PC-9 (cell line): ENCODE measurements at regions of chr9 and their contacts with region 1.

Region 1: GRCh38 chr9:104895572-104895971 is 32.4 kb downstream of the ABCA1 start:
- DNase-seq: no peak
- H3K4me3 ChIP-seq: no peak overlapping the region
- H3K27ac ChIP-seq: no peak overlapping the region
- H3K4me1 ChIP-seq: no peaks in the 10 kb centered on the region
- H3K27me3 ChIP-seq: no peaks in the 10 kb centered on the region
- CTCF ChIP-seq: no peak

Region 2: GRCh38 chr9:104868687-104869404 is 26.7 kb before region 1 on chr9:
- CTCF ChIA-PET with region 1: no interaction called
- POLR2A ChIA-PET with region 1: interaction called, 11 read pairs
- intact Hi-C with region 1: no loop called
- DNase-seq: peak; percentile 72 to 85
- H3K4me3 ChIP-seq: peak overlapping the region; percentile 20; the same call in 1 of the 2 replicates
- H3K27ac ChIP-seq: peak overlapping the region; percentile 90
- H3K4me1 ChIP-seq: peaks cover 87% of the 10 kb centered on the region
- H3K27me3 ChIP-seq: no peaks in the 10 kb centered on the region
- CTCF ChIP-seq: no peak

Region 3: GRCh38 chr9:105007143-105007542 is 111.6 kb after region 1 on chr9:
- CTCF ChIA-PET with region 1: no interaction called
- POLR2A ChIA-PET with region 1: no interaction called
- intact Hi-C with region 1: no loop called
- DNase-seq: peak; percentile 39 to 94
- H3K4me3 ChIP-seq: peak overlapping the region; percentile 16; the same call in 1 of the 2 replicates
- H3K27ac ChIP-seq: peak overlapping the region; percentile 92
- H3K4me1 ChIP-seq: peaks cover 32% of the 10 kb centered on the region
- H3K27me3 ChIP-seq: no peaks in the 10 kb centered on the region
- CTCF ChIP-seq: no peak